ENCODE measurements at regions of chr6 and their contacts with region 1.

Region 1: DNA sequence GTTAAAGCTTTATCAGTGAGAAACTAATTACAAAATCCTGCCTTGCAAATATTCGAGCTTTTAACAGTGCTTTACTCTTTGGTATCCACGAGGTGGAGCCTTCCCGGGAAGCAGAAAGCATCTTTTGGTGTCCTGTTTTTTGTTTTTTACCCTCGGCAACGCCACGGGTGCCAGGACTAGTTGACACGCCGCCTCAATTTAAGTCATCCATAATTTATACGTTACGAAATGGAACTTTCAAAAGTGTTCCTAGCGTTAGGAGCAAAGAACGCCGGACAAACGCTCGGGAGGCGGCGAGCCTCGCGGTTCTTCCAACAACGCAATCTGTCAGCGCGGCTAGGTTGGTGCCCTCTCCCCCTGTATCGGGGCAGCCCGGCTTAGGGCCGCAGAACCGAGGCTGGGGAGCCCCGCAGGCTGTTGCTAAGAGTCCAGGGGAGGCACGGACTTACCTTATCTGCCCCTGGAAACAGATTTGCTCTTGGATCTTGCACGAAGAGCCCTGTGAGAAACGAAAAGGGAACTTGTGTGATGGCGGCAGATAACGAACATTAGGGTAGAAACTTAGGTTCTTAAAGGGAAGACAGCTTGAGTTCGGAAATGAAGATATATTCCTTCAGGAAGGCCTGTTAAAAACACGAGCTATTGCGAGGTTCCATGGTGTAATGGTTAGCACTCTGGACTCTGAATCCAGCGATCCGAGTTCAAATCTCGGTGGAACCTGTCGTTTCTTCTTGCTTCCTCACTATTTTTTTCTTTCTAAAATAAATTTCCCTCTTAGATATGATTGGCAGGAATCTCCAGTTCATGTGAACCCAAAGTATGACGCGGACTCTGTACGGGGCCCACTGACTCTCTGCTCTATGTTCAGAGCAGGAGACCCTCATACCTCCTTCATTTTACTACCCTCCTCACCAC is 46.2 kb upstream of the ZNF184 start:
- DNase-seq: peak; percentile 53 to 62
- H3K4me3 ChIP-seq: peak overlapping the region; percentile 55 to 83 (median 73)
- H3K27ac ChIP-seq: peak overlapping the region; percentile 70 to 90 (median 85)
- H3K4me1 ChIP-seq: peaks cover 0 to 5% of the 10 kb centered on the region in 2 donors
- H3K27me3 ChIP-seq: no peaks in the 10 kb centered on the region
- CTCF ChIP-seq: peak; percentile 34 to 72 (median 56)
- POLR2A ChIP-seq: no peak

Region 2: DNA sequence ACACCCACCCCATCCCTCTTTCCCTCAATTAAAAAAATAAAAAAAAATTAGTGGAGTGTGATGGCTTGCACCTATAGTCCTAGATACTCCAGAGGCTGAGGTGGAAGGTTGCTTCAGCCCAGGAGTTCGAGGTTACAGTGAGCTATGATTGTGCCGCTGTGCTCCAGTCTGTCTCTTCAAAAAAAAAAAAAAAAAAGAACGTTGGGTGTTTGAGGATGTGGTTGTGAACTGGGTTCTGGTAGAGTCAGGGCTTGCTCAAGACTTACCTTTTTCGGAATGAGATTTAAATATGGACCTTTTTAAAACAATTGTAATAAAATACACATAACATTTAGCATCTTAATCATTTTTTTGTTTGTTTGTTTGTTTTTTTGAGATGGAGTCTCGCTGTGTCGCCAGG is 181.2 kb after region 1 on chr6:
- intact Hi-C with region 1: no loop called
- DNase-seq: no peak
- H3K4me3 ChIP-seq: no peak overlapping the region
- H3K27ac ChIP-seq: no peak overlapping the region
- H3K4me1 ChIP-seq: no peaks in the 10 kb centered on the region
- H3K27me3 ChIP-seq: no peaks in the 10 kb centered on the region
- CTCF ChIP-seq: no peak
- POLR2A ChIP-seq: no peak

Region 3: DNA sequence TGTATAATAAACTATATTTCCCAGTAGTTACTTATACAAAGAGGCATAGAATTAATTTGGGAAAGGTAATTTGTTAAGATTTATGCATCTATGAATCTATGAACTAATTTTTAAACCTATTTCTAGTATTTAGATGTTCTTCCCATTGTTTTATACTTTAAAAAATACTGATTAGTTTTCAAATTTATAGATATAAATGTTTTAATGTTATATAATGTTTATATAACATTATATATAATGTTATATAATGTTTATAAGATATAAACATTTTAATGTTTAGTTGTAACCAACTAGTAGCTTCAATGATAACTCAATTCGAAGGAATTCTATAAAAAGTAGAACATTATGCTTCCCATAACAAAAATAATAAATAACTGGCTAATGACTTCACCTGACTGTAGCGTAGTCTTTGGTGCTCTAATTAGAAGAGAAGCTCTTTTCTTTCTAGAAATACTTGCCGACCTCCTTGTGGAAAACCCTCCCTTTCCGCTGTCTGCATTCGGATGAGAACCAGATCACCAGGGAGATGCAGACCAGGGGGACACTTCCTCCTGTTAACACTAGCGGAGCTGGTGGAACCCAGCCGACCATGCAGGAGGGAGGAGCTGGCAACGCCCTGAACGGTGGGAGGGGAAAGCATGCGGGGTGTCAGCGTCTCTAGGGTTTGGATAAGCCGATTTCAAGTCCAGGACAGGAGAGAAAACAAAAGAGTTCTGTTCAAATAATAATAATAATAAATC is 234.7 kb after region 1 on chr6:
- intact Hi-C with region 1: loop called (anchors 5 kb)
- DNase-seq: peak; percentile 53 to 57
- H3K4me3 ChIP-seq: peak overlapping the region in 2 of 3 donors; percentile 16 to 27
- H3K27ac ChIP-seq: no peak overlapping the region
- H3K4me1 ChIP-seq: no peaks in the 10 kb centered on the region
- H3K27me3 ChIP-seq: peaks cover 9% of the 10 kb centered on the region
- CTCF ChIP-seq: no peak
- POLR2A ChIP-seq: no peak